ENCODE measurements at regions of chr4 and their contacts with region 1.

Region 1: GRCh38 chr4:170047771-170048354 is 21.7 kb upstream of the MFAP3L start:
- DNase-seq: no peak
- ATAC-seq: peak in 1 of 4 donors; percentile 61
- H3K4me3 ChIP-seq: no peak overlapping the region
- H3K27ac ChIP-seq: no peak overlapping the region
- H3K4me1 ChIP-seq: no peaks in the 10 kb centered on the region
- H3K27me3 ChIP-seq: no peaks in the 10 kb centered on the region
- CTCF ChIP-seq: peak; percentile 85

Region 2: GRCh38 chr4:169612871-169613859 is 434.7 kb before region 1 on chr4:
- intact Hi-C with region 1: loop called in 1 of 2 experiments (anchors 5 kb)
- DNase-seq: peak; percentile 71 to 76
- ATAC-seq: peak; percentile 64 to 83 (median 69)
- H3K4me3 ChIP-seq: peak overlapping the region; percentile 84
- H3K27ac ChIP-seq: peak overlapping the region; percentile 88
- H3K4me1 ChIP-seq: peaks cover 17% of the 10 kb centered on the region
- H3K27me3 ChIP-seq: no peaks in the 10 kb centered on the region
- CTCF ChIP-seq: peak; percentile 72

Region 3: DNA sequence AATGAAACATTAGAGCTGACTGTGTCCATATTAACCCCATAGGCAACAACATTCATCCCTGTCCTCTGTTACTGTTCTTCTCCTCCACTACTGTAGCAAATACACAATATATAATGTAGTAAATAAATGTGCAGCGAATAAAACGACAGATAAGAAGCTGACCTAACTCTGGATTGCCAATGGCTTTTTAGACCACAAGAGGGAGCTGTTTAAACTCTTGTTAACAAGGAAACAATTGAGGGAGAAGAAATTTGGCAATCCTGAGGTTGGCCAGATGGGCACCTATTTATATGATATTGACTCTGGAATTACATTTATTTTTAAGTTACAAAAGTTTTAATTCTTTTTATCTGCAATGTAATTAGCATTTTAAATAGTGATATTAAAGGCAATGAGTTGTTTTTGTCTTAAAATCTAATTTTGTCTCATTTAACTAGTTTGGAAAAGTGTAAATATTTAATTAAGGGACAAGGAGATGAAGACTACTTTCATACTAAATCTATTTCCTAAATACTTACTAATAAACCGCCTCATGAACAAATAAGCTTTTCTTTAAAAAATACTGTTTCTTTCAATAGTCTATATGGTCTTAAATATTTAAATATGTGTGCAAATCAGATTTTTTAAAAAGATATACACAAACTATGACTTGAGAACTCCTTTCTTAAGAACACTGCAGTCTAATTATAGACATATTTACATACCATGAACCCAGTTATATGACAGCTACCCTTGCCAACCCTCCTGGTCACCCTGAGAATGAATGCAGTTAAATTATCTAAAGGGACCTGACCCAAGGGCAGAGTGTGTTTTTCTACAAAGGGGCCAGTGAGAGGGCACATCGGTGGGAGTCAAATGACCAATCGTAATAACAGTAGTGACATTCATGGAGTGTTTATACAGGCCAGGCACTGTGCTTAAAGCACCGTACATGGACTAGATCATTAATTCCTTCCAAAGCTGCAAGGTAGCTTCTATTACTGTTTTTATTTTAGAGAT is 237.2 kb before region 1 on chr4:
- intact Hi-C with region 1: loop called (anchors 2 to 5 kb)
- DNase-seq: no peak
- ATAC-seq: peak in 3 of 4 donors; percentile 47 to 72 (median 49)
- H3K4me3 ChIP-seq: no peak overlapping the region
- H3K27ac ChIP-seq: no peak overlapping the region
- H3K4me1 ChIP-seq: no peaks in the 10 kb centered on the region
- H3K27me3 ChIP-seq: no peaks in the 10 kb centered on the region
- CTCF ChIP-seq: peak; percentile 88

Region 4: GRCh38 chr4:169902658-169903345 is 145.1 kb before region 1 on chr4:
- intact Hi-C with region 1: loop called in 1 of 2 experiments (anchors 10 kb)
- DNase-seq: no peak
- ATAC-seq: peak in 1 of 4 donors; percentile 73
- H3K4me3 ChIP-seq: no peak overlapping the region
- H3K27ac ChIP-seq: no peak overlapping the region
- H3K4me1 ChIP-seq: no peaks in the 10 kb centered on the region
- H3K27me3 ChIP-seq: peaks cover 0 to 2% (median 0%) of the 10 kb centered on the region in 3 donors
- CTCF ChIP-seq: no peak

Region 5: DNA sequence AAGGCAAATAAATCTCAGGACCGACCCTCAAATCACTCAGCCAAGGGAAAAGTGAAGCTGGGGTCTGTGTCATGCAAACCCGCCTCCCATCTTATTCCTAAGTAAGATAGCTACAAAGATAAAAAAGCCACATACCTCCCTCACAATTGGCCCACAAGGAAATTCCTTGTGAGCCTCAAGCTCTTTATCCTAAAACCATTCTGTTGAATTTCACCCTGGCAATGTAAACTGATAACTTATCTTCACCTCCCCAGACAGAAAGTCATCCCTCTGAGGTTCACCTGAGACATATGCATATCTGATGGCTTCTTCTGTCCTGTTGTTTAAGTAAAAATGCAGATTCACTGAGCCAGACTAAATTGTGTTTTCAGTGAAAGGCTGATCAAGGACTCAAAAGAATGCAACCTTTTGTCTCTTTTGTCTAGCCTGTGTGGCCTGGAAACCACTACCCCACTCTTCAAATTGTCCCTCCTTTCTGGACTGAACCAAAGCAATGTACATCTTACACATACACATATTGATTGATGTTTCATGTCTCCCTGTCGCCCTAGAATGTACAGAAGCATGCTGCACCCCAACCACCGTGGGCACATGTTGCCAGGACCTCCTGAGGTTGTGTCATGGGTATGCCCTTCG is 113.0 kb before region 1 on chr4:
- intact Hi-C with region 1: no loop called
- DNase-seq: no peak
- ATAC-seq: no peak
- H3K4me3 ChIP-seq: no peak overlapping the region
- H3K27ac ChIP-seq: no peak overlapping the region
- H3K4me1 ChIP-seq: no peaks in the 10 kb centered on the region
- H3K27me3 ChIP-seq: no peaks in the 10 kb centered on the region
- CTCF ChIP-seq: no peak